ENCODE measurements at regions of chr3 and their contacts with region 1.

Region 1: GRCh38 chr3:8769088-8769822 is at the start of gene OXTR:
- DNase-seq: peak; percentile 82
- ATAC-seq: peak; percentile 100
- H3K4me3 ChIP-seq: peak within 1 kb of the TSS; percentile 82
- H3K27ac ChIP-seq: no peak within 1 kb of the TSS
- H3K4me1 ChIP-seq: peaks cover 6% of the 10 kb centered on the region; the same call in 1 of the 2 replicates
- H3K27me3 ChIP-seq: peaks cover 21% of the 10 kb centered on the region; the same call in 1 of the 2 replicates
- CTCF ChIP-seq: peak; percentile 99
- POLR2A ChIP-seq: no peak
- RAD21 ChIP-seq: peak; percentile 96
- total RNA-seq, gene OXTR: 56.1 and 76.9 TPM in 2 replicates

Region 2: GRCh38 chr3:8759038-8759707 is 10.1 kb before region 1 on chr3:
- CTCF ChIA-PET with region 1: interaction called, 11 read pairs
- POLR2A ChIA-PET with region 1: no interaction called
- dilution Hi-C with region 1: no loop called
- in situ Hi-C with region 1: no loop called
- intact Hi-C with region 1: no loop called
- DNase-seq: no peak
- ATAC-seq: no peak
- H3K4me3 ChIP-seq: no peak overlapping the region
- H3K27ac ChIP-seq: no peak overlapping the region
- H3K4me1 ChIP-seq: no peaks in the 10 kb centered on the region
- H3K27me3 ChIP-seq: no peaks in the 10 kb centered on the region
- CTCF ChIP-seq: no peak
- POLR2A ChIP-seq: no peak
- RAD21 ChIP-seq: no peak

Region 3: GRCh38 chr3:8888301-8888915 is 119.2 kb after region 1 on chr3:
- CTCF ChIA-PET with region 1: interaction called, 16 read pairs
- POLR2A ChIA-PET with region 1: no interaction called
- dilution Hi-C with region 1: no loop called
- in situ Hi-C with region 1: no loop called
- intact Hi-C with region 1: loop called (anchors 1 kb)
- DNase-seq: peak; percentile 91
- ATAC-seq: peak; percentile 81
- H3K4me3 ChIP-seq: no peak overlapping the region
- H3K27ac ChIP-seq: peak overlapping the region; percentile 98
- H3K4me1 ChIP-seq: peaks cover 33% of the 10 kb centered on the region
- H3K27me3 ChIP-seq: no peaks in the 10 kb centered on the region
- CTCF ChIP-seq: no peak
- POLR2A ChIP-seq: no peak
- RAD21 ChIP-seq: no peak

Region 4: GRCh38 chr3:8954938-8955763 is 185.9 kb after region 1 on chr3:
- CTCF ChIA-PET with region 1: interaction called, 10 read pairs
- POLR2A ChIA-PET with region 1: no interaction called
- dilution Hi-C with region 1: no loop called
- in situ Hi-C with region 1: loop called (anchors 10 kb)
- intact Hi-C with region 1: no loop called
- DNase-seq: peak; percentile 62
- ATAC-seq: peak; percentile 90
- H3K4me3 ChIP-seq: no peak overlapping the region
- H3K27ac ChIP-seq: no peak overlapping the region
- H3K4me1 ChIP-seq: peaks cover 6% of the 10 kb centered on the region; the same call in 1 of the 2 replicates
- H3K27me3 ChIP-seq: no peaks in the 10 kb centered on the region
- CTCF ChIP-seq: 0 out of 2 replicates have a peak, but pooled peaks have one; percentile 5
- POLR2A ChIP-seq: no peak
- RAD21 ChIP-seq: no peak

Region 5: GRCh38 chr3:9067352-9067975 is 298.2 kb after region 1 on chr3:
- CTCF ChIA-PET with region 1: no interaction called
- POLR2A ChIA-PET with region 1: no interaction called
- dilution Hi-C with region 1: no loop called
- in situ Hi-C with region 1: loop called (anchors 25 kb)
- intact Hi-C with region 1: loop called (anchors 1 kb)
- DNase-seq: peak; percentile 71
- ATAC-seq: peak; percentile 92
- H3K4me3 ChIP-seq: no peak overlapping the region
- H3K27ac ChIP-seq: no peak overlapping the region
- H3K4me1 ChIP-seq: no peaks in the 10 kb centered on the region
- H3K27me3 ChIP-seq: peaks cover 14% of the 10 kb centered on the region
- CTCF ChIP-seq: peak; percentile 96
- POLR2A ChIP-seq: peak; percentile 56; the same call in 1 of the 2 replicates
- RAD21 ChIP-seq: peak; percentile 92

Measured in IMR-90 (cell line).